Gastrocnemius medialis (tissue), 4 donors: ENCODE measurements at regions of chr9 and their contacts with region 1.

Region 1: GRCh38 chr9:136118320-136119060 is at the start of gene TMEM250:
- DNase-seq: peak; percentile 93 to 95
- ATAC-seq: peak; percentile 75 to 83
- H3K4me3 ChIP-seq: peak within 1 kb of the TSS; percentile 71 to 97 (median 84)
- H3K27ac ChIP-seq: peak within 1 kb of the TSS; percentile 93 to 100 (median 97)
- H3K4me1 ChIP-seq: peaks cover 19 to 27% of the 10 kb centered on the region in 2 donors
- H3K27me3 ChIP-seq: no peaks in the 10 kb centered on the region
- CTCF ChIP-seq: peak in 4 of 5 experiments; percentile 14 to 71 (median 52)
- POLR2A ChIP-seq: no peak
- total RNA-seq, gene TMEM250: 25.7 to 46.9 (median 41.5) TPM

Region 2: GRCh38 chr9:135797507-135798262 is 320.8 kb before region 1 on chr9:
- in situ Hi-C with region 1: no loop called
- intact Hi-C with region 1: loop called (anchors 1 kb)
- DNase-seq: peak; percentile 53 to 58
- ATAC-seq: peak; percentile 82 to 89
- H3K4me3 ChIP-seq: no peak overlapping the region
- H3K27ac ChIP-seq: peak overlapping the region in 2 of 4 donors; percentile 54 to 72
- H3K4me1 ChIP-seq: peaks cover 15 to 17% of the 10 kb centered on the region in 2 donors
- H3K27me3 ChIP-seq: peaks cover 0 to 17% (median 13%) of the 10 kb centered on the region in 3 donors
- CTCF ChIP-seq: peak; percentile 65 to 79 (median 68)
- POLR2A ChIP-seq: no peak

Region 3: GRCh38 chr9:135907431-135908092 is 210.9 kb before region 1 on chr9 and contains the start of gene CAMSAP1:
- in situ Hi-C with region 1: no loop called
- intact Hi-C with region 1: loop called (anchors 1 kb)
- DNase-seq: peak; percentile 87 to 91
- ATAC-seq: peak; percentile 62 to 68
- H3K4me3 ChIP-seq: peak within 1 kb of the TSS; percentile 70 to 81 (median 72)
- H3K27ac ChIP-seq: peak within 1 kb of the TSS; percentile 90 to 92 (median 90)
- H3K4me1 ChIP-seq: peaks cover 47 to 52% of the 10 kb centered on the region in 2 donors
- H3K27me3 ChIP-seq: no peaks in the 10 kb centered on the region
- CTCF ChIP-seq: no peak
- POLR2A ChIP-seq: peak; percentile 92 to 94
- total RNA-seq, gene CAMSAP1: 54.8 to 94.9 (median 82.9) TPM

Region 4: GRCh38 chr9:135971892-135972291 is 146.6 kb before region 1 on chr9:
- in situ Hi-C with region 1: loop called in 2 of 4 experiments (anchors 5 kb)
- intact Hi-C with region 1: loop called (anchors 1 kb)
- DNase-seq: no peak
- ATAC-seq: no peak
- H3K4me3 ChIP-seq: no peak overlapping the region
- H3K27ac ChIP-seq: no peak overlapping the region
- H3K4me1 ChIP-seq: peaks cover 0 to 5% of the 10 kb centered on the region in 2 donors
- H3K27me3 ChIP-seq: no peaks in the 10 kb centered on the region
- CTCF ChIP-seq: no peak
- POLR2A ChIP-seq: no peak

Region 5: GRCh38 chr9:136051517-136052432 is 66.7 kb before region 1 on chr9:
- in situ Hi-C with region 1: no loop called
- intact Hi-C with region 1: loop called (anchors 1 kb)
- DNase-seq: no peak
- ATAC-seq: peak in 1 of 2 donors; percentile 47
- H3K4me3 ChIP-seq: peak overlapping the region; percentile 46 to 60 (median 52)
- H3K27ac ChIP-seq: peak overlapping the region in 3 of 4 donors; percentile 9 to 33 (median 19)
- H3K4me1 ChIP-seq: peaks cover 25 to 45% of the 10 kb centered on the region in 2 donors
- H3K27me3 ChIP-seq: no peaks in the 10 kb centered on the region
- CTCF ChIP-seq: no peak
- POLR2A ChIP-seq: no peak

Region 6: GRCh38 chr9:136170006-136170901 is 51.8 kb after region 1 on chr9:
- in situ Hi-C with region 1: no loop called
- intact Hi-C with region 1: no loop called
- DNase-seq: no peak
- ATAC-seq: no peak
- H3K4me3 ChIP-seq: no peak overlapping the region
- H3K27ac ChIP-seq: no peak overlapping the region
- H3K4me1 ChIP-seq: no peaks in the 10 kb centered on the region
- H3K27me3 ChIP-seq: peaks cover 18 to 33% (median 31%) of the 10 kb centered on the region in 3 donors
- CTCF ChIP-seq: peak in 4 of 5 experiments; percentile 34 to 54 (median 48)
- POLR2A ChIP-seq: no peak